ENCODE measurements at regions of chr1 and their contacts with region 1.

Region 1: GRCh38 chr1:151934048-151934493 is 24.8 kb upstream of the THEM4 start:
- DNase-seq: peak; percentile 78
- ATAC-seq: peak; percentile 76
- H3K4me3 ChIP-seq: no peak overlapping the region
- H3K4me3 Mint-ChIP-seq: no peak overlapping the region
- H3K27ac ChIP-seq: no peak overlapping the region
- H3K27ac Mint-ChIP-seq: no peak overlapping the region
- H3K4me1 ChIP-seq: peaks cover 0 to 2% of the 10 kb centered on the region in 2 donors
- H3K4me1 Mint-ChIP-seq: peaks cover 10% of the 10 kb centered on the region
- H3K27me3 ChIP-seq: peaks cover 0 to 3% (median 0%) of the 10 kb centered on the region in 4 experiments
- H3K27me3 Mint-ChIP-seq: peaks cover 12% of the 10 kb centered on the region
- CTCF ChIP-seq: peak; percentile 87

Region 2: GRCh38 chr1:151326619-151327222 is 607.4 kb before region 1 on chr1:
- CTCF ChIA-PET with region 1: no interaction called
- POLR2A ChIA-PET with region 1: no interaction called
- intact Hi-C with region 1: no loop called
- DNase-seq: peak; percentile 81
- ATAC-seq: peak; percentile 43
- H3K4me3 ChIP-seq: peak overlapping the region; percentile 72 to 99 (median 90)
- H3K4me3 Mint-ChIP-seq: peak overlapping the region; percentile 93
- H3K27ac ChIP-seq: peak overlapping the region; percentile 87 to 89
- H3K27ac Mint-ChIP-seq: peak overlapping the region; percentile 96
- H3K4me1 ChIP-seq: peaks cover 21 to 26% of the 10 kb centered on the region in 2 donors
- H3K4me1 Mint-ChIP-seq: peaks cover 44% of the 10 kb centered on the region
- H3K27me3 ChIP-seq: no peaks in the 10 kb centered on the region
- H3K27me3 Mint-ChIP-seq: no peaks in the 10 kb centered on the region
- CTCF ChIP-seq: no peak

Region 3: DNA sequence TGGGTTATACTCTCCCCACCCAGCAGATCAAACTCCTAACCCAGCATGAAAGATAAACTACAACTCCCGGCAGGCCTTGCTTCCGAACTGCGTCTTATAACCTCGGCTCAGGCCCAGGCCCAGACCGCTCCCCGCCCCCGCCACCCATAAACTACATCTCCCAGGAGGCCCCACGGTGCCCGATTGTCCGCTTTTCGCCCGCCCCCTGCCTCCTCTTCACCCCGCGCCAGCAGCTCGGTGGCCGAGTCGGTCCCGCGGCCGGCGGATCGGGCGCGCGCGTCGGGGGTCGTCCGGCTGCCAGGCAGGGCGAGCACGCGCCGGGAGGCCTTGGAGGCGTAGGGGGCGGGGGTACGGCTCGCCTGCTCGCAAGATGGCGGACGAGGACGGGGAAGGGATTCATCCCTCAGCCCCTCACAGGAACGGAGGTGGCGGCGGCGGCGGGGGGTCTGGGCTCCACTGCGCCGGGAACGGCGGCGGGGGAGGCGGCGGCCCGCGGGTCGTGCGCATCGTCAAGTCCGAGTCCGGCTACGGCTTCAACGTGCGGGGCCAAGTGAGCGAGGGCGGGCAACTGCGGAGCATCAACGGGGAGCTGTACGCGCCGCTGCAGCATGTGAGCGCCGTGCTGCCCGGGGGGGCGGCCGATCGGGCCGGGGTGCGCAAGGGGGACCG is 322.1 kb before region 1 on chr1 and contains the start of gene SNX27:
- CTCF ChIA-PET with region 1: no interaction called
- POLR2A ChIA-PET with region 1: no interaction called
- intact Hi-C with region 1: no loop called
- DNase-seq: peak; percentile 94
- ATAC-seq: peak; percentile 96
- H3K4me3 ChIP-seq: peak within 1 kb of the TSS; percentile 52 to 94 (median 84)
- H3K4me3 Mint-ChIP-seq: peak within 1 kb of the TSS; percentile 91
- H3K27ac ChIP-seq: peak within 1 kb of the TSS in 1 of 2 donors; percentile 79
- H3K27ac Mint-ChIP-seq: peak within 1 kb of the TSS; percentile 94
- H3K4me1 ChIP-seq: peaks cover 11 to 18% of the 10 kb centered on the region in 2 donors
- H3K4me1 Mint-ChIP-seq: peaks cover 32% of the 10 kb centered on the region
- H3K27me3 ChIP-seq: peaks cover 0 to 3% (median 1%) of the 10 kb centered on the region in 4 experiments
- H3K27me3 Mint-ChIP-seq: peaks cover 5% of the 10 kb centered on the region
- CTCF ChIP-seq: no peak
- total RNA-seq, gene SNX27: 43.2 and 45.6 TPM in 2 replicates

Region 4: DNA sequence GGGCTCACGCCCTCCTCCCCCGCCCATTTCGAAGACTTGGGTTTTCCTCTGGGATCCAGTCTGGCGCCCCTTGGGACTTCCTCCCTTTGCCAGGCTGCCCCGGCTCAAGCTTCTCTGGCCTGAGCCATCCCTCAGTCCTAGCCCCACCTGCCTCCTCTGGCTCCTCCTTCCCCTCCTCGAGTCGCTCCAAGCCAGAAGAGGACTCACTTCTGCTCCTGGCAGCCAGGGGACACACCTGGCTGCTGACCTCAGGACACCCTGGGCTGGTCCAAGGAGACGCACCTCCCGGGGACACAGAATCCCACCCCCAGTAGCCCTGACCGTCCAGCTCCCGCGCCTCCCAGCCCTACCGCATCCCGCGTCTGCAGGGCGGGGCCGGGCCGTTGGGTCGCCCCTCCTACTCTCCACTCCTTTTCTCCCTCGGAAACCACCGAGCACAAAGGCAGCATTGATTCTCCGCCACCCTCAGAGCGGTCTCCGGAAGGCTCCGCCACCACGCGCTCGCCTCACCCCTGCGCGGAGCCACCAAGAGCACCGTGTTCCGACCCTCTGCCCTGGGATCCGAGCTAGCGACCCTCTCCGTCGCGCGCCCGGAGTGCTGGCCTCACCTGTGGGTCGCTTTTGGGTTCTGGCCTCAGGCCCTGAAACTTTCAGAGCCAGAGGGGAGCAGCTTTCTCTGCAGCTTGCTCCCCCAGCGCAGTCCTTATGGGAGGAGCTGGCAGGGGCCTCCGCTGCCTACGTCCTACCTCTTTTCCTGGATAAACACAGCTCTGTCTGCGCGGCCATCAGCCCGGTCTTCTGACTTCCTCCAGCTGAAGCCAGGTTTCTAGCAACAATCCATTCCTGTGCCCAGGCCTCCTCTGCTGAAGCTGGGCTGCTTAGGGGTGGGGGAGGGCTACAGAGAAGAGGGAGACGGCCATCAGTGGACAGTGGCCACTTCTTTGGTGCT is 94.3 kb before region 1 on chr1 and contains the start of gene C2CD4D:
- CTCF ChIA-PET with region 1: no interaction called
- POLR2A ChIA-PET with region 1: no interaction called
- intact Hi-C with region 1: loop called (anchors 5 kb)
- DNase-seq: peak; percentile 78
- ATAC-seq: peak; percentile 53
- H3K4me3 ChIP-seq: peak within 1 kb of the TSS in 4 of 5 experiments; percentile 36 to 56 (median 44)
- H3K4me3 Mint-ChIP-seq: peak within 1 kb of the TSS; percentile 87
- H3K27ac ChIP-seq: no peak within 1 kb of the TSS
- H3K27ac Mint-ChIP-seq: peak within 1 kb of the TSS; percentile 81
- H3K4me1 ChIP-seq: peaks cover 36 to 41% of the 10 kb centered on the region in 2 donors
- H3K4me1 Mint-ChIP-seq: peaks cover 38% of the 10 kb centered on the region
- H3K27me3 ChIP-seq: peaks cover 0 to 20% (median 7%) of the 10 kb centered on the region in 4 experiments
- H3K27me3 Mint-ChIP-seq: peaks cover 10% of the 10 kb centered on the region
- CTCF ChIP-seq: no peak
- total RNA-seq, gene C2CD4D: not detected in 2 replicates

Region 5: GRCh38 chr1:151851886-151852285 is 82.2 kb before region 1 on chr1:
- CTCF ChIA-PET with region 1: no interaction called
- POLR2A ChIA-PET with region 1: no interaction called
- intact Hi-C with region 1: no loop called
- DNase-seq: no peak
- ATAC-seq: no peak
- H3K4me3 ChIP-seq: no peak overlapping the region
- H3K4me3 Mint-ChIP-seq: no peak overlapping the region
- H3K27ac ChIP-seq: no peak overlapping the region
- H3K27ac Mint-ChIP-seq: no peak overlapping the region
- H3K4me1 ChIP-seq: no peaks in the 10 kb centered on the region
- H3K4me1 Mint-ChIP-seq: no peaks in the 10 kb centered on the region
- H3K27me3 ChIP-seq: peaks cover 0 to 9% (median 0%) of the 10 kb centered on the region in 4 experiments
- H3K27me3 Mint-ChIP-seq: peaks cover 12% of the 10 kb centered on the region
- CTCF ChIP-seq: no peak

Region 6: DNA sequence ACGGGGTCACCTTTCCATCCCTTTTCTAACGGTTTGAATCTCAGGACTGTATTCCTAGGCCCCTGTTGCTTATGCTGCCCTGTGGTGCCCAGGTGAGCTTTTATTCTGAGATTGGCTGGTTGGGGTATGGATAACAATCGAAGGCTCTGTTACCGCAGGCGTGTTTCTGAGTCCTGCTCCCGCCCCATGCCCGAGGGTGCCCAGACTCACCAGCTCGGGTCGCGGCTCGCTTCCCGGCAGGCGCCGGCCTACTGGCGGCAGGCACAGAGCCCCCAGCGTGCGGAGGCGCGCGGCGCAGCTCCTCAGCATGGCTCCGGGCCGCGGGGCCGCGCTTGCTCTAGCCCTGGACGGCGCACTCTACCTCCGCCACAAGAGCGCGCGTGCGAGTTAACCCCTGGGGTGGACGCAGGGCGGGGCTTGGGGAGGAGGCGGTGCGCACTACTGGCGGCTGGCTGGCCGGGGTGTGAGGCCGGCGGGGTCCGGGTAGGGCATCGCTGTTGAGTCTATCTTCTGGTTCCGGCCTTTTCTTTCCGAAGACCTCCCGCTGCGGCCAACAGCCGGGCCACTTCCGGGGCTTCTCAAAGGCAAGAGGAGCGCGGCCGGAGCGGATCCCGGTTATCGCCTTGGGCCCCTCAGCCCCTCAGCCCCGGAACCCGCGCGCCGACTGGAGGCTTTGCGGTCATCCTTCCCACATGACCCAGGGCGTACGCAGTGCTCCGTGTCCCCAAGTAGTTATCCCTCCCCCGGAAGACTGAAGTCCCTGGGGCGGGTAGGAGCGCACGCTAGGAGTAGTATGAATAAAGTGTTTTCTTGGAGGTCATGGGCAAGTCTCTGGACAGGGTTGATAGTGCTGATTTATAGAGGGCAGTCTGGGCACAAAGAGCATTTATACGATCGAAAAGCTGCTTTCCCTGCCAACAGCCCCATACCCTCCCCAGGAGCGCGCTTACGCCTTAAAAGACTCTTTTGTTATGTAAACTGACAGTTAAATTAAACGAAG is 24.6 kb before region 1 on chr1 and contains the start of gene THEM4:
- CTCF ChIA-PET with region 1: interaction called, 15 read pairs
- POLR2A ChIA-PET with region 1: interaction called, 3 read pairs
- intact Hi-C with region 1: no loop called
- DNase-seq: peak; percentile 92
- ATAC-seq: peak; percentile 99
- H3K4me3 ChIP-seq: peak within 1 kb of the TSS; percentile 8 to 82 (median 70)
- H3K4me3 Mint-ChIP-seq: peak within 1 kb of the TSS; percentile 92
- H3K27ac ChIP-seq: peak within 1 kb of the TSS; percentile 54 to 70
- H3K27ac Mint-ChIP-seq: peak within 1 kb of the TSS; percentile 86
- H3K4me1 ChIP-seq: peaks cover 7 to 17% of the 10 kb centered on the region in 2 donors
- H3K4me1 Mint-ChIP-seq: peaks cover 11% of the 10 kb centered on the region
- H3K27me3 ChIP-seq: no peaks in the 10 kb centered on the region
- H3K27me3 Mint-ChIP-seq: no peaks in the 10 kb centered on the region
- CTCF ChIP-seq: peak; percentile 20
- total RNA-seq, gene THEM4: 16.1 and 19.8 TPM in 2 replicates

Region 7: GRCh38 chr1:151945725-151946364 is 11.8 kb after region 1 on chr1:
- CTCF ChIA-PET with region 1: interaction called, 29 read pairs
- POLR2A ChIA-PET with region 1: interaction called, 4 read pairs
- intact Hi-C with region 1: no loop called
- DNase-seq: peak; percentile 90
- ATAC-seq: peak; percentile 72
- H3K4me3 ChIP-seq: no peak overlapping the region
- H3K4me3 Mint-ChIP-seq: peak overlapping the region; percentile 71
- H3K27ac ChIP-seq: peak overlapping the region; percentile 84 to 88
- H3K27ac Mint-ChIP-seq: peak overlapping the region; percentile 93
- H3K4me1 ChIP-seq: peaks cover 31 to 38% of the 10 kb centered on the region in 2 donors
- H3K4me1 Mint-ChIP-seq: peaks cover 43% of the 10 kb centered on the region
- H3K27me3 ChIP-seq: no peaks in the 10 kb centered on the region
- H3K27me3 Mint-ChIP-seq: peaks cover 4% of the 10 kb centered on the region
- CTCF ChIP-seq: no peak

Region 8: GRCh38 chr1:151982300-151983005 is 48.4 kb after region 1 on chr1:
- CTCF ChIA-PET with region 1: interaction called, 10 read pairs
- POLR2A ChIA-PET with region 1: no interaction called
- intact Hi-C with region 1: no loop called
- DNase-seq: no peak
- ATAC-seq: no peak
- H3K4me3 ChIP-seq: no peak overlapping the region
- H3K4me3 Mint-ChIP-seq: no peak overlapping the region
- H3K27ac ChIP-seq: no peak overlapping the region
- H3K27ac Mint-ChIP-seq: no peak overlapping the region
- H3K4me1 ChIP-seq: peaks cover 4 to 9% of the 10 kb centered on the region in 2 donors
- H3K4me1 Mint-ChIP-seq: peaks cover 18% of the 10 kb centered on the region
- H3K27me3 ChIP-seq: no peaks in the 10 kb centered on the region
- H3K27me3 Mint-ChIP-seq: peaks cover 5% of the 10 kb centered on the region
- CTCF ChIP-seq: no peak

Region 9: GRCh38 chr1:152175544-152175943 is 241.5 kb after region 1 on chr1:
- CTCF ChIA-PET with region 1: no interaction called
- POLR2A ChIA-PET with region 1: no interaction called
- intact Hi-C with region 1: no loop called
- DNase-seq: no peak
- ATAC-seq: no peak
- H3K4me3 ChIP-seq: no peak overlapping the region
- H3K4me3 Mint-ChIP-seq: no peak overlapping the region
- H3K27ac ChIP-seq: no peak overlapping the region
- H3K27ac Mint-ChIP-seq: no peak overlapping the region
- H3K4me1 ChIP-seq: no peaks in the 10 kb centered on the region
- H3K4me1 Mint-ChIP-seq: no peaks in the 10 kb centered on the region
- H3K27me3 ChIP-seq: peaks cover 0 to 4% (median 0%) of the 10 kb centered on the region in 4 experiments
- H3K27me3 Mint-ChIP-seq: peaks cover 37% of the 10 kb centered on the region
- CTCF ChIP-seq: no peak

Measured in B cell (primary cell).